ENCODE measurements at regions of chr9 and their contacts with region 1.

Region 1: DNA sequence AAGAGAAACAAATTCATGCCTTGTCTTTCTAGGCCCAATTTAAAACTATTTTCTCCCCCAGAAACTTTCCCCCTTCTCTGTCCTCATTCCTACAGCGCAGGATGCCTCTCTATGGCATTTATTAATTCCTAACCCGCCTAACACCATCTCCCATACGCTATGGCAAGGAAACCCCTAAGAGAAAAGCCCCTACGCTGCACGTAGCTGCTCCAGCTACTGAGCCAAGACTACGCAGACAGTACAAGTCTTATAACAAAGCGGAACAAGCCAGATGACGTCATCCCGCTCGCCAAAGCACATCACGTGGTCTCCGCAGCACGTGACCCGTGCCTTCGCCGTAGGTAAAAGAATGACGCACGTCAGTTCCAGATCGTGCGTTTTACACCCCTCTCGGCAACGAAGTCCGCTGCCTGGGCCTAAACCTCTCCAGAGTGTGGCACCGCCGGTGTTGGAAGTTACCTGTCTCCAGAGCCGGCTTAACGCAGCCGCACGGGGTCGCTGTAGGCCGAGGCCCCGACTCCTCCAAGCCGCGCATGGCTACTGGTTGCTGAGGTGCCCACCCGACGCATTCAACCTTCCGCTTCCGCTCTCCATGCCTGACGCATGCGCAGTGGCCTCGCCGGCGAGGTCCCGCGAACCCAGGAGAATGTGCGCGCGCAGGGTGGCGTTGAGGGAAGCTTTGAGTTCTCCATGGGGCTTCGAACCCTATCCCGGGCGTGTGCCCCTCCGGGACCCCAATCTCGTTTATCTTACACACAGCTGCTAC is at the start of gene TRMO:
- DNase-seq: peak; percentile 98 to 99 (median 98)
- ATAC-seq: peak; percentile 85
- H3K4me3 ChIP-seq: peak within 1 kb of the TSS; percentile 88
- H3K4me3 Mint-ChIP-seq: peak within 1 kb of the TSS; percentile 83 to 97 (median 94)
- H3K27ac ChIP-seq: peak within 1 kb of the TSS; percentile 98
- H3K27ac Mint-ChIP-seq: peak within 1 kb of the TSS; percentile 97 to 100 (median 99)
- H3K4me1 ChIP-seq: peaks cover 36 to 38% of the 10 kb centered on the region in 2 donors
- H3K4me1 Mint-ChIP-seq: peaks cover 26 to 66% (median 47%) of the 10 kb centered on the region in 7 donors
- H3K27me3 ChIP-seq: no peaks in the 10 kb centered on the region
- H3K27me3 Mint-ChIP-seq: peaks cover 0 to 5% (median 0%) of the 10 kb centered on the region in 5 donors
- total RNA-seq, gene TRMO: 26.8 to 55.3 (median 43.8) TPM

Region 2: GRCh38 chr9:97632985-97633858 is 288.9 kb before region 1 on chr9 and contains the starts of genes NCBP1 and TSTD2:
- CTCF ChIA-PET with region 1: interaction called, 6 read pairs
- POLR2A ChIA-PET with region 1: interaction called, 11 read pairs
- intact Hi-C with region 1: loop called (anchors 1 kb)
- DNase-seq: peak; percentile 89 to 97 (median 96)
- ATAC-seq: peak; percentile 91
- H3K4me3 ChIP-seq: peak within 1 kb of the TSS; percentile 78
- H3K4me3 Mint-ChIP-seq: peak within 1 kb of the TSS; percentile 86 to 100 (median 96)
- H3K27ac ChIP-seq: peak within 1 kb of the TSS; percentile 88
- H3K27ac Mint-ChIP-seq: peak within 1 kb of the TSS; percentile 98 to 100 (median 99)
- H3K4me1 ChIP-seq: peaks cover 37 to 43% of the 10 kb centered on the region in 2 donors
- H3K4me1 Mint-ChIP-seq: peaks cover 41 to 82% (median 65%) of the 10 kb centered on the region in 7 donors
- H3K27me3 ChIP-seq: no peaks in the 10 kb centered on the region
- H3K27me3 Mint-ChIP-seq: no peaks in the 10 kb centered on the region
- total RNA-seq, gene NCBP1: 33.8 to 42.2 (median 40.6) TPM
- total RNA-seq, gene TSTD2: 15.2 to 23.3 (median 18.6) TPM

Region 3: DNA sequence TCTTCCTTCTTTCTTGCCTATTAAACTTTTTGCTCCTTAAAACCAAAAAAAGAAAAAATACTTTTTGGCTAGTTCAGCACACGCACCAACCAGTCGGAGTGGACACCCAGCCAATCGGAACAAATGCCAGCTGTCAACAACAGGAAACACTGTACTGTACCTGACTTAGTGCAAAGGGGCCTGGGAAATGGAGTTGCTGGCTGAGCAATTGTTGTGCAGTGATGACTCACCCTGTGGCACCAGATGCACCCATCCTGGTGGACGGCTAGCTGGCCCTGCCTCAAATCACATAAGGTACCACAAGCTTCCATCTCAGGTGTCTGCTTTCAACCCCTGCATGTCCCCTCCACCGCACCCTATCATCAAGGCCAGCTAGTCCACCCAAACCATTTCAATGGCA is 48.3 kb before region 1 on chr9:
- CTCF ChIA-PET with region 1: no interaction called
- POLR2A ChIA-PET with region 1: no interaction called
- intact Hi-C with region 1: no loop called
- DNase-seq: no peak
- ATAC-seq: no peak
- H3K4me3 ChIP-seq: no peak overlapping the region
- H3K4me3 Mint-ChIP-seq: no peak overlapping the region
- H3K27ac ChIP-seq: no peak overlapping the region
- H3K27ac Mint-ChIP-seq: no peak overlapping the region
- H3K4me1 ChIP-seq: no peaks in the 10 kb centered on the region
- H3K4me1 Mint-ChIP-seq: peaks cover 0 to 5% (median 0%) of the 10 kb centered on the region in 7 donors
- H3K27me3 ChIP-seq: no peaks in the 10 kb centered on the region
- H3K27me3 Mint-ChIP-seq: peaks cover 4 to 28% (median 10%) of the 10 kb centered on the region in 5 donors

Region 4: DNA sequence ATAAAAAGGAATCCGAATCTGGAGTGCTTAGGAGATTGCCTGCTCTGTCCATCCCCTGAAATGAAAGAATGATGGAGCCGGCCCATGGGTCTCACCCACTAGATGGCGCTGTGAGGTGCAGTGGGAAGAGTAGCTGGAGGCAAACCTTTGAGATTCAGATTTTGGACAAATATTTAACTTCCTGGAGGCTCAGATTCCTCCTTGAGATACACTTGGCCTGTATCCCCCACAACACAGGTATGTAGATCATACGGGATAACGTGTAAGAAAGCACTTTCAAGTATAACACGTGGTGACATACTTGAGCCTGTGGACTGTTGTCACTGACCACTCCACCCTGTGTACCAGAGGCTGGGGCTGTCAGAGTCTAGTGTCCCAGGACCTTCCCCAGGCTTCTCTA is 32.1 kb before region 1 on chr9:
- CTCF ChIA-PET with region 1: interaction called, 72 read pairs
- POLR2A ChIA-PET with region 1: interaction called, 715 read pairs
- intact Hi-C with region 1: loop called (anchors 1 kb)
- DNase-seq: peak; percentile 40 to 73 (median 57)
- ATAC-seq: peak; percentile 88
- H3K4me3 ChIP-seq: no peak overlapping the region
- H3K4me3 Mint-ChIP-seq: peak overlapping the region in 1 of 10 donors; percentile 51
- H3K27ac ChIP-seq: no peak overlapping the region
- H3K27ac Mint-ChIP-seq: peak overlapping the region in 5 of 9 donors; percentile 28 to 81 (median 68)
- H3K4me1 ChIP-seq: peaks cover 0 to 4% of the 10 kb centered on the region in 2 donors
- H3K4me1 Mint-ChIP-seq: peaks cover 6 to 23% (median 18%) of the 10 kb centered on the region in 7 donors
- H3K27me3 ChIP-seq: no peaks in the 10 kb centered on the region
- H3K27me3 Mint-ChIP-seq: no peaks in the 10 kb centered on the region

Region 5: DNA sequence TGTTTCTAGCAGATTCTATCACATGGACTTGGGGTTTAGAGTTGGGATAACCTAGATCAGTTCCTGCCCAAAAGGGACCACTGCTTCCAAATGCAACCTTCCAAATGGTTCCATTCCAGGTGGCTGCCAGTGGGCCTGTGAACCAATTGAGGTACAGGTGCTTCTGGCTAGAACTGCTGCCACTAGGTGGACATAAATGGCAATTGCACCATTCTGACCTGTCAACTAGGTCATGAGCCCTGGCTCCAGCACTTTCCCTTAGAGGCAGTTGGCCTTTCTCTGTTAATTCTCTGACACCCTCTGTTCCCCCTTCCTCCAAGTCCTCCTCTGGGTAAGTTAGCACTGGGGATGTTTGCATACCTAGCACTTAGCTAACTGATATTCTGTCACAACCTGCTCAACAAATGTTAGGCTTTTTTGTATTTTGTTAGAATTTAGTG is 32.4 kb after region 1 on chr9:
- CTCF ChIA-PET with region 1: interaction called, 118 read pairs
- POLR2A ChIA-PET with region 1: interaction called, 45 read pairs
- intact Hi-C with region 1: loop called (anchors 1 kb)
- DNase-seq: peak in 8 of 9 donors; percentile 34 to 69 (median 60)
- ATAC-seq: peak; percentile 90
- H3K4me3 ChIP-seq: no peak overlapping the region
- H3K4me3 Mint-ChIP-seq: no peak overlapping the region
- H3K27ac ChIP-seq: no peak overlapping the region
- H3K27ac Mint-ChIP-seq: peak overlapping the region in 4 of 9 donors; percentile 14 to 78 (median 44)
- H3K4me1 ChIP-seq: peaks cover 0 to 10% of the 10 kb centered on the region in 2 donors
- H3K4me1 Mint-ChIP-seq: peaks cover 0 to 13% (median 9%) of the 10 kb centered on the region in 7 donors
- H3K27me3 ChIP-seq: no peaks in the 10 kb centered on the region
- H3K27me3 Mint-ChIP-seq: peaks cover 0 to 18% (median 0%) of the 10 kb centered on the region in 5 donors

Region 6: GRCh38 chr9:98045234-98046179 is 123.4 kb after region 1 on chr9:
- CTCF ChIA-PET with region 1: interaction called, 9 read pairs
- POLR2A ChIA-PET with region 1: interaction called, 36 read pairs
- intact Hi-C with region 1: loop called in 1 of 2 experiments (anchors 1 kb)
- DNase-seq: peak in 8 of 9 donors; percentile 27 to 83 (median 72)
- ATAC-seq: peak; percentile 96
- H3K4me3 ChIP-seq: peak overlapping the region; percentile 59
- H3K4me3 Mint-ChIP-seq: peak overlapping the region; percentile 77 to 95 (median 86)
- H3K27ac ChIP-seq: peak overlapping the region; percentile 49
- H3K27ac Mint-ChIP-seq: peak overlapping the region; percentile 85 to 99 (median 89)
- H3K4me1 ChIP-seq: peaks cover 0 to 8% of the 10 kb centered on the region in 2 donors
- H3K4me1 Mint-ChIP-seq: peaks cover 8 to 51% (median 41%) of the 10 kb centered on the region in 7 donors
- H3K27me3 ChIP-seq: no peaks in the 10 kb centered on the region
- H3K27me3 Mint-ChIP-seq: peaks cover 0 to 5% (median 0%) of the 10 kb centered on the region in 5 donors

Region 7: GRCh38 chr9:98192503-98193335 is 270.6 kb after region 1 on chr9 and contains the start of gene CORO2A:
- CTCF ChIA-PET with region 1: interaction called, 3 read pairs
- POLR2A ChIA-PET with region 1: no interaction called
- intact Hi-C with region 1: loop called (anchors 2 to 5 kb)
- DNase-seq: peak; percentile 37 to 85 (median 47)
- ATAC-seq: peak; percentile 86
- H3K4me3 ChIP-seq: peak within 1 kb of the TSS; percentile 81
- H3K4me3 Mint-ChIP-seq: peak within 1 kb of the TSS; percentile 76 to 92 (median 86)
- H3K27ac ChIP-seq: peak within 1 kb of the TSS; percentile 53
- H3K27ac Mint-ChIP-seq: peak within 1 kb of the TSS; percentile 19 to 90 (median 83)
- H3K4me1 ChIP-seq: peaks cover 17 to 22% of the 10 kb centered on the region in 2 donors
- H3K4me1 Mint-ChIP-seq: peaks cover 12 to 46% (median 41%) of the 10 kb centered on the region in 7 donors
- H3K27me3 ChIP-seq: no peaks in the 10 kb centered on the region
- H3K27me3 Mint-ChIP-seq: peaks cover 0 to 17% (median 0%) of the 10 kb centered on the region in 5 donors
- total RNA-seq, gene CORO2A: 3.0 to 9.7 (median 7.7) TPM